ENCODE measurements at regions of chr15 and their contacts with region 1.

Region 1: GRCh38 chr15:63752075-63752684 is 81.6 kb downstream of the HERC1 start:
- DNase-seq: peak in 2 of 5 donors; percentile 63 to 77
- H3K4me3 ChIP-seq: no peak overlapping the region
- H3K27ac ChIP-seq: no peak overlapping the region
- H3K4me1 ChIP-seq: no peaks in the 10 kb centered on the region
- H3K27me3 ChIP-seq: no peaks in the 10 kb centered on the region
- CTCF ChIP-seq: peak; percentile 79

Region 2: DNA sequence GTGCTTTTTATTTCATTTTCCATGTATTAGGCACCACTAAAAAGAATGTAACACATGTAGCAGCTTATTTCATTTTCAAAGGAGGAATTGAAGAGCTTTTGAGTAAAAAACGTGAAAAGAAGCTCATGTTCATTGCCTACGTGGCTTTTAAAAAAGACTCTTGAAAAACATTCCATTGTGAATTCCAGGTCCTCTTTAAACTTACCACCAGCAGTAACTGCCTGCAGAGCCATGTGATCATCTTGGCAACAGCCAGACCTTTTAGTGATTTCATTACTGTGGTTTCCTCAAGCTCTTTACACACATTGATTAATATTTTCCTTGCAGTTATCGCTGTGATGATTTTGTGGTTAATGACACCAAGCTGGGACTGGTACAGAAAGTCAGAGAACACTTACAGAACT is 198.8 kb before region 1 on chr15:
- intact Hi-C with region 1: no loop called
- DNase-seq: peak in 2 of 5 donors; percentile 30 to 80
- H3K4me3 ChIP-seq: peak overlapping the region in 2 of 3 donors; percentile 13 to 44
- H3K27ac ChIP-seq: peak overlapping the region; percentile 15 to 51
- H3K4me1 ChIP-seq: peaks cover 0 to 15% (median 0%) of the 10 kb centered on the region in 3 donors
- H3K27me3 ChIP-seq: no peaks in the 10 kb centered on the region
- CTCF ChIP-seq: no peak

Region 3: GRCh38 chr15:63891079-63891767 is 139.0 kb after region 1 on chr15:
- intact Hi-C with region 1: loop called (anchors 10 kb)
- DNase-seq: peak; percentile 76 to 87 (median 80)
- H3K4me3 ChIP-seq: no peak overlapping the region
- H3K27ac ChIP-seq: no peak overlapping the region
- H3K4me1 ChIP-seq: peaks cover 0 to 13% (median 2%) of the 10 kb centered on the region in 3 donors
- H3K27me3 ChIP-seq: no peaks in the 10 kb centered on the region
- CTCF ChIP-seq: peak; percentile 83

Region 4: DNA sequence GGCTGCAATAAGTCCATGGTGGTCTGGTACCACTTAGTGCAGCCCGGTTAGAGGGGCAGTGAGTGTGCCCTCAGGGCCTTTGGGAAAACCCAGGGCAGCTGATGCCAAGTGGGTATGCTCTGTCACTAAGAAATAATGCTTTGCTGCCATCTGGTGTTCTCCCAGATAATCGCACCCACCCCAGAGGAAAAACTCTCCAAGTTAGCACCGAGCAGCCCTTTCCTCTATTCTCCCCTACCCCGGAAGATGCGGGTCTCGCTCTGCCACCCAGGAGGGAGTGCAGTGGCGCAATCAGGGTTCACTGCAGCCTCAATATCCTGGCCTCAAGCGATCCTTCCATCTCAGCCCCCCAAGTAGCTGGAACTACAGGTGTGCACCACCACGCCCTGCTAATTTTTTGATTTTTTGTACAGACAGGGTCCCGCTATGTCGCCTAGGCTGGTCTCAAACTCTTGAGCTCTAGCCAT is 315.4 kb after region 1 on chr15:
- intact Hi-C with region 1: loop called (anchors 10 kb)
- DNase-seq: peak in 4 of 5 donors; percentile 72 to 82 (median 79)
- H3K4me3 ChIP-seq: no peak overlapping the region
- H3K27ac ChIP-seq: no peak overlapping the region
- H3K4me1 ChIP-seq: peaks cover 0 to 19% (median 7%) of the 10 kb centered on the region in 3 donors
- H3K27me3 ChIP-seq: no peaks in the 10 kb centered on the region
- CTCF ChIP-seq: peak; percentile 93